Activated CD4-positive, alpha-beta memory T cell treated with anti-CD3 and anti-CD28 coated beads, Interleukin-2, amount 10 ng/mL, durations not matched to agents 7 days and 5 days (primary cell): ENCODE measurements at regions of chr9 and their contacts with region 1.

Region 1: GRCh38 chr9:96667361-96667728 is 12.2 kb upstream of the PRXL2C start:
- DNase-seq: no peak
- H3K4me3 Mint-ChIP-seq: no peak overlapping the region
- H3K27ac Mint-ChIP-seq: no peak overlapping the region
- H3K4me1 Mint-ChIP-seq: peaks cover 2% of the 10 kb centered on the region
- H3K27me3 Mint-ChIP-seq: peaks cover 2% of the 10 kb centered on the region

Region 2: GRCh38 chr9:96327694-96328352 is 339.5 kb before region 1 on chr9:
- CTCF ChIA-PET with region 1: interaction called, 20 read pairs
- POLR2A ChIA-PET with region 1: no interaction called
- DNase-seq: peak; percentile 31
- H3K4me3 Mint-ChIP-seq: no peak overlapping the region
- H3K27ac Mint-ChIP-seq: no peak overlapping the region
- H3K4me1 Mint-ChIP-seq: no peaks in the 10 kb centered on the region
- H3K27me3 Mint-ChIP-seq: no peaks in the 10 kb centered on the region

Region 3: GRCh38 chr9:96441798-96442445 is 225.4 kb before region 1 on chr9:
- CTCF ChIA-PET with region 1: interaction called, 19 read pairs
- POLR2A ChIA-PET with region 1: no interaction called
- DNase-seq: no peak
- H3K4me3 Mint-ChIP-seq: no peak overlapping the region
- H3K27ac Mint-ChIP-seq: no peak overlapping the region
- H3K4me1 Mint-ChIP-seq: no peaks in the 10 kb centered on the region
- H3K27me3 Mint-ChIP-seq: no peaks in the 10 kb centered on the region

Region 4: DNA sequence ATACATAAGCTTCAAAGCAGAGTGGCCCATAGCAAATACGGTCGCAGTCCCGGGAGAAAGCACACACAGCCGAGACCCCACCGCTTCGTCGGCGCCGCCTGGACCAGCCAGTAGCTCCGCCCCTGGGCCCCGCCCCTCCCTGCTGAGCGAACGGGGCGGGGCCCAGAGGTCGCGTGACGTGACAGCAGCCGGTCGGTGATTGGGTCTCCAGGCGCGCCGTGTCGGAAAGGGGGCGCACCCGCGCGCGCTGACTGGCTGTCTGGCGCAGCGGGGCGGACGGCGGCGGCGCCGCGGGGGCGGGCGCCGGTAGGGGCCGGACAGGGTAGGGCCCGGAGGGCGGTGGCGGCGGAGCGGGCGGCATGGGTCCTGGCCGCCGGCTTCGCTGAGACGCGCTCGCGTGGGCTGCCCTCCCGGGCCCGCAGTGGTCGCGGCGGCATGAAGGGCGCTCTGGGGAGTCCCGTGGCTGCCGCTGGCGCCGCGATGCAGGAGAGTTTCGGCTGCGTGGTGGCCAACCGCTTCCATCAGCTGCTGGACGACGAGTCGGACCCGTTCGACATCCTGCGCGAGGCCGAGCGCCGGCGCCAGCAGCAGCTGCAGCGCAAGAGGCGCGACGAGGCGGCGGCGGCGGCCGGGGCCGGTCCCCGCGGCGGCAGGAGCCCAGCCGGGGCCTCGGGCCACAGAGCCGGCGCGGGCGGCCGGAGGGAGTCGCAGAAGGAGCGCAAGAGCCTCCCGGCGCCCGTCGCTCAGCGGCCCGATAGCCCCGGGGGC is 217.3 kb before region 1 on chr9 and contains the start of gene HABP4:
- CTCF ChIA-PET with region 1: interaction called, 10 read pairs
- POLR2A ChIA-PET with region 1: interaction called, 3 read pairs
- DNase-seq: peak; percentile 96
- H3K4me3 Mint-ChIP-seq: peak within 1 kb of the TSS; percentile 85
- H3K27ac Mint-ChIP-seq: peak within 1 kb of the TSS; percentile 44
- H3K4me1 Mint-ChIP-seq: peaks cover 29% of the 10 kb centered on the region
- H3K27me3 Mint-ChIP-seq: peaks cover 11% of the 10 kb centered on the region
- total RNA-seq, gene HABP4: 13.1 to 14.1 TPM